ENCODE measurements at regions of chr9 and their contacts with region 1.

Region 1: DNA sequence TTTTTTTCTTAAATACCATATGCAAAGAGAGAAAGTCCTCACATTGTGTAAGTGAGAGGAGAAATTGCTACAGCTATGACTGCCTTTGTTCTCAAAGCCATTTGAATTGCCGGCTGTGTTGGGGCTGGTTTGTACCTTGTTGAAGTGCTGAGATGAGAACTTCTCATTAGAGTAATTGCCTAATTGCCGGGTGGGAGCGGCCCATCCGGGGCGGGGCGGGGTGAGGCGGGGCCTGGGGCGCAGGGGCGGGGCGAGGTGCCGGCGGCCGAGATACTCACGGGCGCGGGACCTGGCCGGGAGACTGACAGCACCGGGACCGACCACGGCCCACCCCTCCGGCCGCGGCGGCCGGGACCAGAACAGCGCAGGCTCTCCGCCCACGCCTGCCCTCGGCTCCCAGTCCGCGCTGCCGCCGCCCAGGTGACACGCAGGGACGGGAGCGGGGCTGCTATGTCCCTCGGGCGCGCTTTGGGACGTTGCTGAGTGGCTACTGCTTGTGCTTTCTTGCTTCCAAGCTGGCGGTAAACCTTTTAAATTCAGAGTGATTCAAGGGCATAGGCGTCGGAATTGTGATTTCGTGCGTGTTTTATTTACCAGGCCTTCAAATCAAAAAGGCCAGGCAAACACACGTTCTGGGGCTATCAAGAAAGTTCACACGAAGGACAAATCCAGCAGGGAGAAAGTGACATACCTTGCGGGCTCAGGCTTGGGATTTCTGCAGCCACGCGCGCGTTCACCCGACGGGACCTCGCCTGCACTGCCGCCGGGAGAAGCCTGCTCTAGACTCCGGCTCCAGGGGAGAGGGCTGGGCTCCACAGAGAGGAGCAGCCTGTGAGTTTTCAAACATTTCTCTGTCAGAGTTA is 269.1 kb downstream of the FANCC start:
- DNase-seq: peak in 1 of 2 experiments; percentile 74
- ATAC-seq: peak; percentile 47 to 67
- H3K4me3 ChIP-seq: peak overlapping the region; percentile 57
- H3K27ac ChIP-seq: peak overlapping the region; percentile 84 to 87
- H3K4me1 ChIP-seq: peaks cover 59% of the 10 kb centered on the region
- CTCF ChIP-seq: no peak
- EP300 ChIP-seq: no peak
- POLR2A ChIP-seq: peak; percentile 53
- RAD21 ChIP-seq: no peak

Region 2: GRCh38 chr9:94912700-94913249 is 135.7 kb before region 1 on chr9:
- CTCF ChIA-PET with region 1: interaction called, 13 read pairs
- POLR2A ChIA-PET with region 1: interaction called, 6 read pairs
- DNase-seq: peak; percentile 73 to 93
- ATAC-seq: peak; percentile 28 to 47
- H3K4me3 ChIP-seq: no peak overlapping the region
- H3K27ac ChIP-seq: peak overlapping the region; percentile 97 to 99
- H3K4me1 ChIP-seq: peaks cover 96% of the 10 kb centered on the region
- CTCF ChIP-seq: no peak
- EP300 ChIP-seq: peak; percentile 72 to 92; a peak in 3 of 5 replicates
- POLR2A ChIP-seq: no peak
- RAD21 ChIP-seq: peak; percentile 42 to 58; a peak in 4 of 5 replicates

Region 3: GRCh38 chr9:95018099-95018936 is 30.1 kb before region 1 on chr9:
- CTCF ChIA-PET with region 1: interaction called, 21 read pairs
- POLR2A ChIA-PET with region 1: interaction called, 5 read pairs
- DNase-seq: peak; percentile 65 to 87
- ATAC-seq: peak; percentile 65 to 80
- H3K4me3 ChIP-seq: peak overlapping the region; percentile 22; the same call in 2 of the 3 replicates
- H3K27ac ChIP-seq: peak overlapping the region; percentile 86 to 99
- H3K4me1 ChIP-seq: peaks cover 99% of the 10 kb centered on the region
- CTCF ChIP-seq: no peak
- EP300 ChIP-seq: peak; percentile 22 to 54; a peak in 2 of 5 replicates
- POLR2A ChIP-seq: peak; percentile 17; the same call in 1 of the 2 replicates
- RAD21 ChIP-seq: 0 out of 5 replicates have a peak, but pooled peaks of 1 of the 2 experiments have one; percentile 15

Region 4: DNA sequence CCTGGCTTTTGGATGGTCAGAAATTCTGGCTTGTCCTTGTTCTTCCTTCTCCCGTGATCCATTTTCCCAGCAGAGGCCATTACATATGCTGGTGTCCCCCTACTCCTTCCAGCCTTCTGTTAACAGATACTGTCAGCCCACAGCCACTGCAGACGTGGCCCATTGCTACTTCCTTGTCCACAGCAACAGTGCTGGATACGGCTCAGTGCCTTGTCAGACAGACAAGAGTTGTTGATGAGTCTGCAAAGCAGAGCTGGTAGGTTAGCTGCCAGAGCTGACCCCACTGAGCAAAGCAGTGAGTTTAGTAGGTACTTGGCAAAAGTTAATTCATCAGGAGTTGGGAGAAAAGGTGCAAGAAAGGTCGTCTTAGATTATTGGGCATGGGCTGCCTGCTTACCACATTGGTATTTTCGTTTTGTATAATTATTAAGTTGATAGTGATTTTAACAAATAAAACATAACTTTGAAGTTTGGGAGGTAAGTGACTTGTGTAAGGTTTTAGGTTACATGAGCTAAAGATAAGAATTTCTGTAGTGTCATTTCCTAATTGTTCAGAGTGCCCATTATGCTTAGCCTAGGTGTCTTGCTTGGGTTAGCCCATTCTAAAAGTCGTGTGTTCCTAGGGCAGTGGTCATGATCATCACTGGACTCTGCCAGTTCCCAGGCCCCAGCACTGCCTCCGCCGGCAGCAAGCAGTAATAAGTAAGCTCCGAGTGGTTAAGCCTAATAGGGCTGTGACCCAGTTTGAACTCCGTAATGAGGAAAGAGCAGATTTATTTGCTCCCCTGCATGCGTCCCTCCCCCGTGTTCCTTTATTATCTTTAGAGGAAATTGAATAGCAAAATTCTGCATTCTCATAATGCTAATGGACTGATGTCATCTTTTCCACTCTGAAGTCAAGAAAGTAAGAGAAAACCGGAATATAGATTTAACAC is 23.0 kb before region 1 on chr9:
- CTCF ChIA-PET with region 1: interaction called, 45 read pairs
- POLR2A ChIA-PET with region 1: interaction called, 12 read pairs
- DNase-seq: peak in 1 of 2 experiments; percentile 93
- ATAC-seq: peak; percentile 71 to 76
- H3K4me3 ChIP-seq: peak overlapping the region; percentile 11; the same call in 1 of the 3 replicates
- H3K27ac ChIP-seq: peak overlapping the region; percentile 86 to 99
- H3K4me1 ChIP-seq: peaks cover 100% of the 10 kb centered on the region
- CTCF ChIP-seq: no peak
- EP300 ChIP-seq: peak in 1 of 2 experiments; percentile 60; a peak in 2 of 5 replicates
- POLR2A ChIP-seq: no peak
- RAD21 ChIP-seq: peak; percentile 41 to 43; a peak in 4 of 5 replicates

Region 5: GRCh38 chr9:95031711-95032461 is 16.6 kb before region 1 on chr9:
- CTCF ChIA-PET with region 1: interaction called, 45 read pairs
- POLR2A ChIA-PET with region 1: interaction called, 4 read pairs
- DNase-seq: no peak
- ATAC-seq: peak in 1 of 2 experiments; percentile 14; a peak in 3 of 6 replicates
- H3K4me3 ChIP-seq: peak overlapping the region; percentile 6; the same call in 1 of the 3 replicates
- H3K27ac ChIP-seq: peak overlapping the region; percentile 42 to 74; a peak in 5 of 6 replicates
- H3K4me1 ChIP-seq: peaks cover 99% of the 10 kb centered on the region
- CTCF ChIP-seq: no peak
- EP300 ChIP-seq: no peak
- POLR2A ChIP-seq: no peak
- RAD21 ChIP-seq: no peak

Region 6: GRCh38 chr9:95065224-95065623 is 16.8 kb after region 1 on chr9:
- CTCF ChIA-PET with region 1: interaction called, 17 read pairs
- POLR2A ChIA-PET with region 1: interaction called, 4 read pairs
- DNase-seq: no peak
- ATAC-seq: peak; percentile 10 to 16; a peak in 4 of 6 replicates
- H3K4me3 ChIP-seq: peak overlapping the region; percentile 9; the same call in 1 of the 3 replicates
- H3K27ac ChIP-seq: peak overlapping the region; percentile 62 to 80
- H3K4me1 ChIP-seq: peaks cover 100% of the 10 kb centered on the region
- CTCF ChIP-seq: no peak
- EP300 ChIP-seq: no peak
- POLR2A ChIP-seq: no peak
- RAD21 ChIP-seq: no peak